Activated CD8-positive, alpha-beta memory T cell treated with anti-CD3 and anti-CD28 coated beads, Interleukin-2, amount 10 ng/mL, durations not matched to agents 7 days and 5 days (primary cell): ENCODE measurements at regions of chr6 and their contacts with region 1.

Region 1: GRCh38 chr6:25053875-25054371 is 118.2 kb upstream of the RIPOR2 start:
- DNase-seq: no peak
- ATAC-seq: peak; percentile 16
- H3K4me3 Mint-ChIP-seq: no peak overlapping the region
- H3K27ac Mint-ChIP-seq: peak overlapping the region; percentile 71
- H3K4me1 Mint-ChIP-seq: peaks cover 73% of the 10 kb centered on the region
- H3K27me3 Mint-ChIP-seq: no peaks in the 10 kb centered on the region

Region 2: DNA sequence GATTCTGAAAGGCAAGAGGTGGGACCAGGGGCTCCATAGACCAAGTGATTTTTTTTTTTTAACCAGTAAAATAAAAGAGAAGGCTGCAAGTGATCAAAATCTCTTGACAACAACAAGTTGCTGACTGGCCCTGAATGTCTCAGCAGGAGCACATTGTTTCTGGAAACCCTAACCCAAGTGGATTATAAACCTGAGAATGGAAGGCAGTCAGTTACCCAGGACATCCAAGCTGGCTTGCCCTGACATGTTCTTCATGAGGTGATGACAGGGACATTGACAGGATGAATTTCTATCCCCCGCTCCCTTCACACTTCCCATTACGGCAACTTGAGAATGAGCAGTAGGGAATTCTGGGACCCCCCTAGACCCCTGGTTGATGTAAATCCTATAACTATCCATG is 68.6 kb before region 1 on chr6:
- CTCF ChIA-PET with region 1: no interaction called
- DNase-seq: no peak
- ATAC-seq: no peak
- H3K4me3 Mint-ChIP-seq: no peak overlapping the region
- H3K27ac Mint-ChIP-seq: no peak overlapping the region
- H3K4me1 Mint-ChIP-seq: peaks cover 11% of the 10 kb centered on the region
- H3K27me3 Mint-ChIP-seq: no peaks in the 10 kb centered on the region

Region 3: GRCh38 chr6:25042036-25042521 is 11.8 kb before region 1 on chr6:
- CTCF ChIA-PET with region 1: interaction called, 37 read pairs
- DNase-seq: peak; percentile 64
- ATAC-seq: peak; percentile 63
- H3K4me3 Mint-ChIP-seq: peak overlapping the region; percentile 94
- H3K27ac Mint-ChIP-seq: peak overlapping the region; percentile 92
- H3K4me1 Mint-ChIP-seq: peaks cover 49% of the 10 kb centered on the region
- H3K27me3 Mint-ChIP-seq: no peaks in the 10 kb centered on the region